Activated CD8-positive, alpha-beta memory T cell treated with anti-CD3 and anti-CD28 coated beads, Interleukin-2, amount 10 ng/mL, durations not matched to agents 7 days and 5 days (primary cell): ENCODE measurements at regions of chr2 and their contacts with region 1.

Region 1: DNA sequence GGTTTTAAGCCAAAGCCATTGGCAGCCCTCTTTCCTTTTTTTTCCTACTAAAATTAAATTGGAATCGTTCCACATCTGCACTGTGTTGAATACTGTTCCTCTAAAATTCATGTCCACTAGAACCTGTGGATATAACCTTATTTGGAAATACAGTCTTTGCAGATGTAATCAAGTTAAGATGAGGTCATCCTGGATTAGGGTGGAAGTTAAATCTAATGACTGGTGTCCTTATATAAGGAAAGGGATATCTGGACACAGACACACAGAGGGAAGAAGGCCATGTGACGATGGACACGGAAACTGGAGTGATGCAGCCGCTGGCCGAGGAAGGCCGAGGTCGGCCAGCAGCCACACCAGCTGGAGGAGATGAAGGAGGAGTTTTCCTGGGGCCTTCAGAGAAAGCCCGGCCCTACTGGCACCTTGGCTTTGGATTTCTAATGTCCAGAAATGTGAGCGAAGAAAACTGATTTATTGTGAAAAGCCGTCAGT is 49.4 kb downstream of the LONRF2 start:
- DNase-seq: no peak
- ATAC-seq: no peak
- H3K4me3 Mint-ChIP-seq: no peak overlapping the region
- H3K27ac Mint-ChIP-seq: no peak overlapping the region
- H3K4me1 Mint-ChIP-seq: peaks cover 4% of the 10 kb centered on the region
- H3K27me3 Mint-ChIP-seq: peaks cover 1% of the 10 kb centered on the region

Region 2: GRCh38 chr2:100197631-100198153 is 75.2 kb before region 1 on chr2:
- CTCF ChIA-PET with region 1: no interaction called
- DNase-seq: no peak
- ATAC-seq: no peak
- H3K4me3 Mint-ChIP-seq: no peak overlapping the region
- H3K27ac Mint-ChIP-seq: no peak overlapping the region
- H3K4me1 Mint-ChIP-seq: no peaks in the 10 kb centered on the region
- H3K27me3 Mint-ChIP-seq: peaks cover 7% of the 10 kb centered on the region

Region 3: DNA sequence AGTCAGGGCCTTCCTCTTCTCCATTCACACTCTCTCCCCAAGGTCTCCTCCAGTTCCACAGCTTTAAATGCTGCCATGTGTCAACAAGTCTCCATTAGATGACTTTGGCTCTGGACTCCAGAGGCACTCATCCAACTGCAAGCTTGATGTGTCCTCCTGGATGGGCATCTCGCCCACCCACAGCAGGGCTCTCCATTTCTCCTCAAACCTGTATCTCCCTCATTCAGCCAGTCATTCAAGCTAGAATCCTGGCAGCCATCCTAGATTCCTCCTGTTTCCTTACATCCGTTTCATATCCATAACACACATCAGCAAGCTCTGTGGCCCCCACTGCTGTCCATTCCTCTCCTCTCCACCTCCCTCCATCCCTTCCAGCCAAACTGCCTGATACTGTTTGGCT is 42.1 kb before region 1 on chr2:
- CTCF ChIA-PET with region 1: no interaction called
- DNase-seq: no peak
- ATAC-seq: no peak
- H3K4me3 Mint-ChIP-seq: no peak overlapping the region
- H3K27ac Mint-ChIP-seq: no peak overlapping the region
- H3K4me1 Mint-ChIP-seq: peaks cover 13% of the 10 kb centered on the region
- H3K27me3 Mint-ChIP-seq: peaks cover 6% of the 10 kb centered on the region

Region 4: DNA sequence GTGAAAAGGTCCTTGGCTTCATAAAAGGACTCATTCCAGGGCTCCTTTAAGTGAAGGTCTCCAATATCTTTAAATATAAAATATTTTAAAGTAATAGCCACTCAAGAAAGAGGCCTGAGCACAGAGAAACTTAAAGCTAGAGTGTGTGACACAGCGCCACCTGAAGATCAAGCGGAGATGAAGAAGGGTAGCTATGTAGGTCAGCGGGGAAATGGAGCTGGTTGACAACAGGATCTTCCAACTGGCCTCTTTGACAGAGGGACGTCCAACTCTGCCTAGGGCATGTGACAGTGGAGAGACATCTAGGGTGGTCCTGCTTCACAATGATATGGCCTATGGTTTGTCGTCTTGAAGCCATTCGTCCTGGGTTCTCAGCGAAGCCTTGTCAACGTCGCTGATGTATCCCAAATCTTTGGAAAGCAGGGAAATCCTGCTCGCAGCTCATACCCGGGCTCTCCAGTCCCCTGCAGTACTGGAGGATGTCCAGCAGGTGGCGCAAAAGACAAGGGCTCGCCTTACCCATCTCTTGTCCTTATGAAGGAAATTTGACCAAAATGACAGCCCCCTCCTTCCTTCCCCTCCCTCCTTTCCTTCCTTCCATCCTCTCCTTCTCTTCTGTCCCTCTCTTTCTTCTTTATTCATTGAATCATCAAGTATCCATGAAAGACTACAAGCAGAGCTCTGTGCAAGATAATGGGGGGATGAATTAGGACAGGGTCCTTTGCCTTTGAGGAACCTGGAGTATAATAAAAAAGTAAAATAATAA is 10.1 kb before region 1 on chr2:
- CTCF ChIA-PET with region 1: interaction called, 14 read pairs
- DNase-seq: peak; percentile 69
- ATAC-seq: peak; percentile 60
- H3K4me3 Mint-ChIP-seq: no peak overlapping the region
- H3K27ac Mint-ChIP-seq: no peak overlapping the region
- H3K4me1 Mint-ChIP-seq: no peaks in the 10 kb centered on the region
- H3K27me3 Mint-ChIP-seq: no peaks in the 10 kb centered on the region

Region 5: GRCh38 chr2:100365434-100365833 is 92.5 kb after region 1 on chr2:
- CTCF ChIA-PET with region 1: no interaction called
- DNase-seq: no peak
- ATAC-seq: no peak
- H3K4me3 Mint-ChIP-seq: no peak overlapping the region
- H3K27ac Mint-ChIP-seq: no peak overlapping the region
- H3K4me1 Mint-ChIP-seq: peaks cover 5% of the 10 kb centered on the region
- H3K27me3 Mint-ChIP-seq: peaks cover 24% of the 10 kb centered on the region